ENCODE measurements at regions of chr10 and their contacts with region 1.

Region 1: GRCh38 chr10:84264611-84265141 is 19.8 kb downstream of the RGR start:
- H3K4me3 ChIP-seq: no peak overlapping the region
- H3K27ac ChIP-seq: no peak overlapping the region
- H3K4me1 ChIP-seq: no peaks in the 10 kb centered on the region
- CTCF ChIP-seq: peak; percentile 87

Region 2: GRCh38 chr10:84352251-84352842 is 87.7 kb after region 1 on chr10:
- CTCF ChIA-PET with region 1: interaction called, 14 read pairs
- POLR2A ChIA-PET with region 1: no interaction called
- H3K4me3 ChIP-seq: no peak overlapping the region
- H3K27ac ChIP-seq: no peak overlapping the region
- H3K4me1 ChIP-seq: peaks cover 11% of the 10 kb centered on the region; the same call in 1 of the 2 replicates
- CTCF ChIP-seq: peak; percentile 50

Region 3: DNA sequence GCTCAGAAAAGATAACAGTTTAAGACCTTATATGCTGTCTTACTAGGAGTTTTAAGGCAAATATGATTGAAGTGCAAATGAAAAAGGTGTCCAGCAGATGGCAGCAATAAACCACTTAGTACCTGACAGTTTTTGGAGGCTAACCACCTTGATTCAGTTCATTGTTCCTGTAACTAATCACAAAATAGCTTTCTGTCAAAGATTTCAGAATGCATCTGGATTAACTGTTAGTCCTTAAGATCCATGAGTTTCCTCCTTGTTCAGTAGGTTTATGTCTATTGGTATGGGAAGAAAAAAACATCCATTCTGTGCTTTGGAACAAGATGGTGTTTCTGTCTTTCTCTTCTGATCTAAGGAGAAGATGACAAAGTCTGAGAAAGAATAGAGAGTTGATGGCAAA is 110.3 kb after region 1 on chr10:
- CTCF ChIA-PET with region 1: interaction called, 25 read pairs
- POLR2A ChIA-PET with region 1: no interaction called
- H3K4me3 ChIP-seq: no peak overlapping the region
- H3K27ac ChIP-seq: no peak overlapping the region
- H3K4me1 ChIP-seq: no peaks in the 10 kb centered on the region
- CTCF ChIP-seq: peak; percentile 39; the same call in 1 of the 2 replicates

Region 4: GRCh38 chr10:84429926-84430520 is 165.3 kb after region 1 on chr10:
- CTCF ChIA-PET with region 1: interaction called, 16 read pairs
- POLR2A ChIA-PET with region 1: no interaction called
- H3K4me3 ChIP-seq: no peak overlapping the region
- H3K27ac ChIP-seq: no peak overlapping the region
- H3K4me1 ChIP-seq: 0 out of 2 replicates have a peak, but pooled peaks cover 2% of the 10 kb centered on the region
- CTCF ChIP-seq: peak; percentile 53; the same call in 1 of the 2 replicates

Region 5: GRCh38 chr10:84531396-84531795 is 266.7 kb after region 1 on chr10:
- CTCF ChIA-PET with region 1: interaction called, 291 read pairs
- POLR2A ChIA-PET with region 1: no interaction called
- H3K4me3 ChIP-seq: no peak overlapping the region
- H3K27ac ChIP-seq: no peak overlapping the region
- H3K4me1 ChIP-seq: no peaks in the 10 kb centered on the region
- CTCF ChIP-seq: no peak